Activated CD8-positive, alpha-beta T cell treated with anti-CD3 and anti-CD28 coated beads, Interleukin-2, amount 10 ng/mL, durations not matched to agents 7 days and 5 days (primary cell): ENCODE measurements at regions of chr14 and their contacts with region 1.

Region 1: GRCh38 chr14:24114536-24115450 is at the starts of genes DCAF11 and NRL:
- DNase-seq: peak; percentile 99
- ATAC-seq: peak; percentile 92
- H3K4me3 Mint-ChIP-seq: peak within 1 kb of the TSS; percentile 96
- H3K27ac Mint-ChIP-seq: peak within 1 kb of the TSS; percentile 99
- H3K4me1 Mint-ChIP-seq: peaks cover 38% of the 10 kb centered on the region
- H3K27me3 Mint-ChIP-seq: no peaks in the 10 kb centered on the region
- total RNA-seq, gene DCAF11: 101 to 107 TPM
- total RNA-seq, gene NRL: 2.8 to 3.4 TPM

Region 2: GRCh38 chr14:23895480-23895879 is 219.3 kb before region 1 on chr14:
- CTCF ChIA-PET with region 1: no interaction called
- POLR2A ChIA-PET with region 1: no interaction called
- DNase-seq: no peak
- ATAC-seq: no peak
- H3K4me3 Mint-ChIP-seq: no peak overlapping the region
- H3K27ac Mint-ChIP-seq: no peak overlapping the region
- H3K4me1 Mint-ChIP-seq: no peaks in the 10 kb centered on the region
- H3K27me3 Mint-ChIP-seq: peaks cover 3% of the 10 kb centered on the region

Region 3: DNA sequence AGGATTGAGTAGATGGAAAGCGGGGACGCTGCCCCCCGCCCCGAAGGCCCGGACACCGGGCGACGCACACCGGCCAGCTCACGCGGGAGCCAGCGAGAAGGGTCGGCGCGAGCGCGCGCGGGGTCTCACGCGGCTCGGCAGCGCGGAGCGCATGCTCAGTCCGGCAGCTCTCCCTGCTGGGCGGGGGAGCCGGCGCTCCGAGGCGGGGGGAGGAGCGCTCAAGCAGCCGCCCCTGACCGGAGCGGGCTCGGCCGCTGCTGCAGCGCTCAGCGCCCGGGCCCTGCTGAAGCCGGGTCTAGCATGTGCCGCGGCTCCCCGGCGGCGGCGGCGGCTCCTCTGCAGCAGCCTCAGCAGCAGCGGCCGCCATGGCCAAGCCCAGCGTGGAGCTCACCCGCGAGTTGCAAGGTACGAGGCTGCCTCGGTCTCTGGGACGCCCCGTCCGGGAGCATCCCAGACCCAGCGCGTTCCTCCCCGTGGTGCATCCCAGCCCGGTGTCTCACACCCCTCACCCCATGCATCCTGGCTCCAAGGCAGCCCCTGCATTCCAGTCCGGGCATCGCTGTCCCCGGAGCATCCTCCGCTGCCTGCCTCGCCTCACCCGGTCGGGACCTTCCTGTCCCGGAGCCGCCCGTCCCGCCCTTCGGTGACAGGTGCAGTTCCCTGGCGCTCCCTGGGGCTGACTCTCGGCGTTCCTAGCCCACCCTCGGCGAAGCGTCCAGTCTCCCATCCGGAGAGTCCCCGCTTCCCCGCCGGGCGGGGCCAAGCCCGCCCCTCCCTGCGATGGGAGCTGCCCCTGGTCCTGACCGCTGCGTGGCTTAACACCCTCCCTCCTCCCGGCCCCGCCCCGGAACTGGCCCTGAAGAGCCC is 62.8 kb before region 1 on chr14 and contains the start of gene CARMIL3:
- CTCF ChIA-PET with region 1: interaction called, 210 read pairs
- POLR2A ChIA-PET with region 1: interaction called, 20 read pairs
- DNase-seq: peak; percentile 73
- ATAC-seq: peak; percentile 85
- H3K4me3 Mint-ChIP-seq: peak within 1 kb of the TSS; percentile 70
- H3K27ac Mint-ChIP-seq: peak within 1 kb of the TSS; percentile 70
- H3K4me1 Mint-ChIP-seq: peaks cover 26% of the 10 kb centered on the region
- H3K27me3 Mint-ChIP-seq: peaks cover 36% of the 10 kb centered on the region
- total RNA-seq, gene CARMIL3: 0.86 to 0.95 TPM

Region 4: GRCh38 chr14:24093901-24094761 is 20.7 kb before region 1 on chr14 and contains the start of gene PCK2:
- CTCF ChIA-PET with region 1: interaction called, 315 read pairs
- POLR2A ChIA-PET with region 1: interaction called, 89 read pairs
- DNase-seq: peak; percentile 84
- ATAC-seq: peak; percentile 80
- H3K4me3 Mint-ChIP-seq: peak within 1 kb of the TSS; percentile 100
- H3K27ac Mint-ChIP-seq: peak within 1 kb of the TSS; percentile 99
- H3K4me1 Mint-ChIP-seq: peaks cover 42% of the 10 kb centered on the region
- H3K27me3 Mint-ChIP-seq: no peaks in the 10 kb centered on the region
- total RNA-seq, gene PCK2: 49.6 to 54.9 TPM

Region 5: DNA sequence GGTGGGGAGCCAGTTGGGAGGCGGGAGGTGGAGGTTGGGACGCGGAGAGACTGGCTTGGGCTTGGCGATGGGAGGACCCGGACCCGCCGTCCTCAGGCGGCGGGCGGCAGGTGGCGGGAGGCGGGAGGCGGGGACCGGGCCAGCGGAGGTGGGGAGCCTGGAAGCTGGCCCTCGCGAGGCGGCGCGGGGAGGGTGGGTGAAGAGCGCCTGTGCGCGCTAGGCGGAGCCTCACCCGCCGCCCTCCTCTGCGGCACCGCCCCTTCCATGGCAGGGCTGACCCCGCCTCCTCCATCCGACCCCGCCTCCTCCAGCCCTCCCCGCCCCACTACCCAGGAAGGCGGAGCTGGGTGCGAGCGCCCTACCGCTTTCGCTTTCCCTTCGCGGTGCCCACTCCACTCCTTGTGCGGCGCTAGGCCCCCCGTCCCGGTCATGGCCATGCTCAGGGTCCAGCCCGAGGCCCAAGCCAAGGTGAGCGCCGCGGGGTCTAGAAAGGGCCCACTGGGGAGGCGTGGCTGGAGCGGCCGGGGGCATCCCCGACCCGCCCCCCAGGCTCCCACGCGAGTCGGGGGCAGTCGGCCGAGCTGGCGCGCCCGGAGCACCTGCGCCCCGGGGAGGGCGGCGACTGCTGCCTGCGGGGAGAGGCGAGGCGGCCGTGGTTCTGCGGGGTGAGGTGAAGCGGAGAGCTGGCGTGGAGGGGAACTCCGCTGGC is 21.2 kb after region 1 on chr14 and contains the start of gene PSME1:
- CTCF ChIA-PET with region 1: interaction called, 43 read pairs
- POLR2A ChIA-PET with region 1: interaction called, 119 read pairs
- DNase-seq: peak; percentile 95
- ATAC-seq: peak; percentile 91
- H3K4me3 Mint-ChIP-seq: peak within 1 kb of the TSS; percentile 86
- H3K27ac Mint-ChIP-seq: peak within 1 kb of the TSS; percentile 91
- H3K4me1 Mint-ChIP-seq: peaks cover 55% of the 10 kb centered on the region
- H3K27me3 Mint-ChIP-seq: no peaks in the 10 kb centered on the region
- total RNA-seq, gene PSME1: 516 to 530 TPM

Region 6: DNA sequence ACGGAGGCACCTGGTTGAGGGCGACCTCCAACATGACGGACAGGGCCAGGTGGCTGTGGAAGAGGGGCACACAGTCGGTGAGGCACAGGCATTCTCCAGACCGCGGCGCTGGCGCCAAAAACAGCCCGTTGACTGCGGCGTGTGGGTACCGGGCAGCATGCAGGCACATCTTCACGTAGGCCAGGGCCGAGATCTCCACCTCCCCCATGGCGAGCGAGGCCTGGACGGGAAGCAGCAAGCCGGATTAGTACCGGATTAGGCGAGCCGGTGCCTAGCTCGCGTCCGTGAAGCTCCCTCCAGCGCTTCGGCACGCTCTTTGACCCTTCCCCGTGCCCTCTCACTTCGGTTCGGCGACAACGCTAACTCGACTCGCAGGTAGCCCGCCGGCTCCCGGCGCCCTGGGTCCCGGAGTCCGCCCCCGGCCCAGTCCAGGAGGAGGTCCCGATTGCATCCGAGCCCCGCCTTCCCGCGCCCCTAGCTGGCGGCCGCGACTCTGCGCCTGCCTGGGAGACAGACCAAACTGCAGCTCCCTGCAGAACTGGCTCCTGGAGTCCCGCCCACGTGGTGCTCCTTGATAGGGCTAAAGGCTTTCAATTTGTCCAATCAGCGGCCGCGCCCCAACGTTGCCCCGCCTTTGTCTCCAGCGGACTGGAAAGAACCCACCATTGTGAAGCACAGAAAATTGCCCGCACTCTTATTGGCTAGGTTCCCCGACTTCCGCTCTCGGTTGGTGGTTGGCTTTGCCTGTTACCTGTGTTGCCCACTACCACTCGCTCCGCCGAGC is 26.5 kb after region 1 on chr14 and contains the start of gene EMC9:
- CTCF ChIA-PET with region 1: interaction called, 43 read pairs
- POLR2A ChIA-PET with region 1: interaction called, 119 read pairs
- DNase-seq: peak; percentile 100
- ATAC-seq: peak; percentile 92
- H3K4me3 Mint-ChIP-seq: peak within 1 kb of the TSS; percentile 97
- H3K27ac Mint-ChIP-seq: peak within 1 kb of the TSS; percentile 77
- H3K4me1 Mint-ChIP-seq: peaks cover 66% of the 10 kb centered on the region
- H3K27me3 Mint-ChIP-seq: no peaks in the 10 kb centered on the region
- total RNA-seq, gene EMC9: 49.9 to 53.2 TPM

Region 7: DNA sequence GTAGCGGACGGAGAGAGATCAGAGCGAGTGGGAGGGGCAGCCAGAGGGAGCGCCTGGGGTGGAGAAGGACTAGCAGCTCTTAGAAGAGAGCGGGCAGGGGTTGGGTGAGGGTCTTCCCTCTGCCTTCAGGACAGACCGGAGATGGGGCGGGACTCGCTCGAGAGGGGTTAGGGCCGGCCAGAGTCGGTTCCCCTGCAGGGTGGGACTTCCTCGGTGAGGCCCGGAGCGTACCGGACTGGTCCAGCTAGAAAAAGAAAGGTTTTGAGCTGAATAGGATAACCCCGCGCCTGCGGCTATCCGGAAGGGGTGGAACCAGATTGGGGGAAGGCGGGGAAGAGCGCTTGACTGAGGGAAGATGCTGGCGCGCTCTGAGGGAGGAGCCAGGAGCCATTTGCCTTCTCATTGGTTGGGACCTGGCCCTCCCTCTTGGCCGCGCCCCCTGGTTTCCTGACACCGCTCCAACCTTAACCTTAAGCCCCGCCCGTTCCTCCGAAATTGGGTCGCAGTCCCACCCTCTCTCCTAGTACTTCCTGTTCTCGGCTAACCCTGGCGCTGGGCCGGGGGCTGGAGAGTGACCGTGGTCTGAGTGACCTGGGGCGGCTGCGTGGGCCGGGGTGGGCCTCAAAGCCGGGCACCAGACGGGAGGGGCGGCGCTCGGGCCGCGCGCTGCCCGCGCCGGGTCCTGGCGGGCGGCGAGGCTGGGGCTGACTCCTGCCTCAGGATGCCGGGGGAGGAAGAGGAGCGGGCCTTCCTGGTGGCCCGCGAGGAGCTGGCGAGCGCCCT is 32.4 kb after region 1 on chr14 and contains the start of gene RNF31:
- CTCF ChIA-PET with region 1: interaction called, 22 read pairs
- POLR2A ChIA-PET with region 1: interaction called, 56 read pairs
- DNase-seq: peak; percentile 100
- ATAC-seq: peak; percentile 87
- H3K4me3 Mint-ChIP-seq: peak within 1 kb of the TSS; percentile 88
- H3K27ac Mint-ChIP-seq: peak within 1 kb of the TSS; percentile 95
- H3K4me1 Mint-ChIP-seq: peaks cover 67% of the 10 kb centered on the region
- H3K27me3 Mint-ChIP-seq: no peaks in the 10 kb centered on the region
- total RNA-seq, gene RNF31: 123 to 142 TPM

Region 8: DNA sequence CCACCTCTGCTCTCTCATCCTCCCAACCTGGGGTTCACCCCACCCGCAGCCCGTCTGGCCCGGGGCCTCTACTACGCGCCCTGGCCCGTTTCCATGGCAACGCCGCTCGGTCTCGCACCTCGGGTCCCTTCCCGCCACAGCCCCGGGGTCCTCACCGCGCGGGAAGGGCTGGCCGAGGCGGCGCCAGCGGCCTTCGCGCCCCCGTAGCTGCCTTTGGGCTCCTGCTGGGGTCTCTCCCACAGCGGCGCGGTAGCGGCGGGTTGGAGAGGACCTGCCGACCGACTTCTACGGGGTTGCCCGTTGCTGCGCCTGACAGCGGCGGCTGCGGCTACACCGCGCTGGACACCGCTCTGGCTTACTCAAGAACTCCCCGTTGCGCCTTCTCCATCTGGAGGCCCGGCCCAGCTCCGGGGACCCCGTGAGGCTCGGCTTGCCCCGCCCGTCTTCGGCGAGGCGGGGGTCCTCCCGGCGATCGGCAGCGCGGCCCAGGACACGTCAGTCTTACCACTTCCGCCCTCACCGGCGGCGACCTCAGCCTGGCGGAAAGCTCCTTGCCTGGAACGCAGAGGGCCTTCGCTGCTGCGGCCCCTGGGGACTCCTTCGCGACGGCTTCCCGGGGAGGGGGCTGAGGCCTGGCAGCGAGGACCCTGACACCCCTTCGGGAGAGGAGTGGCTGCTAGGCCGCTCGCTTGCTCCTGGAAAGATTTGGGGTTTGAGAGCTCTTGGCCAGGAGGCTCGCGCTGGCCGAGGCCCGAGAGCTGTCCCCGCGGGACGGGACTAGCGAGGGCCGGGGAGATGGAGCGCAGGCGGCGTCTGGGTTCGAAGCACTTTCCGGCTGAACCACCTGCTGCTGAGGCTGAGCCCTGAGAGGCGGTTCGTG is 80.6 kb after region 1 on chr14 and contains the start of gene TM9SF1:
- CTCF ChIA-PET with region 1: no interaction called
- POLR2A ChIA-PET with region 1: interaction called, 13 read pairs
- DNase-seq: peak; percentile 92
- ATAC-seq: peak; percentile 88
- H3K4me3 Mint-ChIP-seq: peak within 1 kb of the TSS; percentile 88
- H3K27ac Mint-ChIP-seq: peak within 1 kb of the TSS; percentile 96
- H3K4me1 Mint-ChIP-seq: peaks cover 56% of the 10 kb centered on the region
- H3K27me3 Mint-ChIP-seq: no peaks in the 10 kb centered on the region
- total RNA-seq, gene TM9SF1: 29.3 to 32.8 TPM